ENCODE measurements at regions of chr3 and their contacts with region 1.

Region 1: DNA sequence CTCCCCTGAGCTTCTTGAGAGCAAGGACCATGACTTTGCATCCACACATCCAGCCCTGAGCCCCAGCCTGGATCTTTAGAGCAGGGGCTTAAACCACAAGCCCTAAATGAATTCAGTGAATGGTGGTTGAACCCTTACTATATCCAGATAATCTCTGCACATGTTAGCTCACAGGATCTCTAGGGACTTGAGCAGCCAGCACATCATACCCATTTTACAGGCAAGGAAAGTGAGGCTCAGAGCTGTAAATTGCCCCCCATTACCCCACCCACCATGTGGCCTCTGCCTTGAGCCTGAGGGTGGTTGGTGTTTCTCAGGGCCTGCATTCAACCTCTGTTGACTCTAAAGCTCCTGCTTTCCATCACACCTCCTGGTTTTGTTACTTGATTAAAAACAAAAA is 27.6 kb downstream of the EAF1 start:
- DNase-seq: no peak
- CTCF ChIP-seq: no peak

Region 2: GRCh38 chr3:15491143-15491542 is 36.2 kb after region 1 on chr3:
- CTCF ChIA-PET with region 1: no interaction called
- POLR2A ChIA-PET with region 1: no interaction called
- DNase-seq: peak; percentile 43
- CTCF ChIP-seq: no peak

Region 3: GRCh38 chr3:15513810-15514662 is 59.1 kb after region 1 on chr3:
- CTCF ChIA-PET with region 1: no interaction called
- POLR2A ChIA-PET with region 1: interaction called, 13 read pairs
- DNase-seq: no peak
- CTCF ChIP-seq: no peak

Measured in GM10248 (cell line).